ENCODE measurements at regions of chr1 and their contacts with region 1.

Region 1: DNA sequence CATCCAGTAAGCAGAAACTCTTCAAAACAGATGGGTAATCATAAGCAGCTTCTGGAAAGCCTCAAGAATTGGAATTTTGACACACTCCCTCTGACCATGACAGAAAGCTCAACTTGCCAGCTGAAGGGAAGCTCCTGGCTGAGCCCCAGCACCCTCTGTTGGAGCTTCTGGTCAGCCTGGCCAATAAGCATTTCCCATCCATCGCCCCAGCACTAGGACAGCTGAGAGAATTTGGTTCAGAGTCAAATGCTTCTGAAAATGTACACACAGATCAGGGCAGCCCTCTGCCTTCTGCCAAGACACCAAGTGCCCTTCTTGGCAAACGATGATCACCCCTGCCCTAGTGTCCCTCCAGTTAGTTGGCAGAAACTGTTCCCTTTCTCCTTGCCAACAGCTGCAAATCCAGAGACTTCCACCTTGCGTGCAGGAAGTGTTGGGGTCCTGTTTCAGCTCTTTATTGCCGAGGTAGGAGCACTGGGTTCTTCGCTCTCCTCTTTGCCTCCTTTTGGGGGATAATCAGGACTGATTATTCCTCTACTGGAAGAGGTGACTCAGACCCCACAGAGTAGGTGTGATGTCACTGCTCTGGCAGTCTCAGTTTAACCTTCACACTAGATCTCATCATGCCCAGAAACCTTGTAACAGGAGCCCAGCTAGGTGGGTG is 11.9 kb downstream of the PIGV start:
- DNase-seq: peak in 1 of 5 donors; percentile 37
- H3K4me3 ChIP-seq: no peak overlapping the region
- H3K27ac ChIP-seq: peak overlapping the region; percentile 53 to 68
- H3K4me1 ChIP-seq: peaks cover 0 to 8% (median 7%) of the 10 kb centered on the region in 3 donors
- H3K27me3 ChIP-seq: no peaks in the 10 kb centered on the region
- CTCF ChIP-seq: no peak

Region 2: DNA sequence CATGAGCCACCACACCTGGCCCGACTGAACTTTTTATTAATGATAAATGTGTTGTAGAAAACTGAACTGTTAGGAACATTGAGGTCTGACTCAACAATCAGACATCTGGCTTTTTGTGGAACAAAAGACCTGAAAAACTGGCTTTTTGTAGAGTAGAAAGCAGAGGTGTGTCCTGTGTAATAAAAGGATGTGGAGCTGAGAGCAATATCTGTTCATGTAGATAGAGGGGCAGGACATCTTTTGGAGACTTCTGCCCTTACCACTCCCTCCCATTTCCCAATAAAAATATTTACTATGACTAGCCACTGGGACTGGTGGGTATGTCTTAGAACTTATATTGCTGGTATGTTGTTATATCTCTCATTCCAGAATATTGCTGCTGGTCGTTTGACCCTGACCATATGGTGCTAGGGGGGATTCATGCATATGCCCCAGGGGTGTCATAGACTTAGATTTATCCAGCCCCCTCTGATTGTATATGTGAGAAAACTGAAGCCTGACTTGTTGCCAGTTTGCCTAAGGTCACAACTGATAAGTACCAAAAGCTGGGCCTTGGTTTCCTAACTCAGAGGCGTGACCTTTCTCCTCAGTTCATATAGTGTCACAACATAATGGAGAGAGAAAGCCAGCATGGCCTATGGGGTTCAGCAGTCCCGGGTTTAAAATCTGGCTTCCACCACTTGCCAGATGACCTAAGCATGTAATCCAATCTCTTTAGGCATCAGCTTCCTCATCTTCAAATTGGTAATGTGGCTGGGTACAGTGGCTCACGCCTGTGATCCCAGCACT is 45.3 kb before region 1 on chr1:
- intact Hi-C with region 1: no loop called
- DNase-seq: no peak
- H3K4me3 ChIP-seq: no peak overlapping the region
- H3K27ac ChIP-seq: no peak overlapping the region
- H3K4me1 ChIP-seq: peaks cover 0 to 9% (median 0%) of the 10 kb centered on the region in 3 donors
- H3K27me3 ChIP-seq: no peaks in the 10 kb centered on the region
- CTCF ChIP-seq: no peak

Region 3: DNA sequence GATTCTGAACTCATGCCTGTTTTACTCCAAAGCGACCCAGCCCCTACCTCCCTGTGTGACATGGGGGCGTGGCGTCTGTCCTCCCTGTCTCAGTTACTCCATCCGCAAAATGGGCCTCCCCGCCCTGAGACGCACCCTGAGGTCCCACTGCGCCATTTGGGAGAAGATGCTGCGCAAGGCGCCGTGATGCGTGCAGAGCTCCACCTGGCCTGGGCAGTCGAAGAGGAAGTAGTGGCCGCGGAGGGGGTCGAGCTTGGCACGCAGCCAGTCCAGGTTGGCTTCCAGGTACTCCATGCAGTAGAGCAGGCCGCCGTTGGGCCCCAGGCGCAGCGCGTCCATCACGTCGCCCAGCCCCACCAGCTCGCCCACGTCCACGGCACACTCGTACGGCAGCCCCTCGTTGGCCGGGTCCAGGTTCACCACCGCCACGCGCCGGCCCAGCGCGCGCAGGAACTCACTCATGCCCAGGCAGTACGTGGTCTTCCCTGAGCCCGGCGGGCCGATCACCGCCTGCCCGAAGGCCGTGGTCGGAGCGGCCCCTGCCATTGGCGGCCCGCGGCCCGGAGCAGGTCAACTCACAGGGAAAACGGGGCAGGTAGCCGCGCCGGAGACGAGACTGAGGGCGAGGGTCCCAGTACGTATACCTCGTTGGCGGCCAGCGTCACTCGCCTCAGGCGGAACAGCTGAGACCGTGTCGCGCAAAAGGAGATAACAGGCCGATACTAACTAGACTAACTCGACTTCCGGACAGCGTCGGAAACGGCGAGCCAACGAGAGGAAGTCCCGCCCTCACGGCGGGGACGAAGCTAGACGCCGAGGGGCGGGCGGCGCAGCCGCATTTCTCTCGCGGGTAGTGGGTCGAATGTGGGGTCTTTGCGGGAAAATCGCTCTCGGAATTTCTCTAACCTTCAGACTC is 90.2 kb after region 1 on chr1 and contains the start of gene GPN2:
- intact Hi-C with region 1: loop called (anchors 10 kb)
- DNase-seq: peak; percentile 80 to 95 (median 87)
- H3K4me3 ChIP-seq: peak within 1 kb of the TSS; percentile 68 to 92 (median 74)
- H3K27ac ChIP-seq: peak within 1 kb of the TSS; percentile 83 to 94
- H3K4me1 ChIP-seq: peaks cover 3 to 14% (median 8%) of the 10 kb centered on the region in 3 donors
- H3K27me3 ChIP-seq: no peaks in the 10 kb centered on the region
- CTCF ChIP-seq: no peak
- total RNA-seq, gene GPN2: 28.8 TPM

Region 4: DNA sequence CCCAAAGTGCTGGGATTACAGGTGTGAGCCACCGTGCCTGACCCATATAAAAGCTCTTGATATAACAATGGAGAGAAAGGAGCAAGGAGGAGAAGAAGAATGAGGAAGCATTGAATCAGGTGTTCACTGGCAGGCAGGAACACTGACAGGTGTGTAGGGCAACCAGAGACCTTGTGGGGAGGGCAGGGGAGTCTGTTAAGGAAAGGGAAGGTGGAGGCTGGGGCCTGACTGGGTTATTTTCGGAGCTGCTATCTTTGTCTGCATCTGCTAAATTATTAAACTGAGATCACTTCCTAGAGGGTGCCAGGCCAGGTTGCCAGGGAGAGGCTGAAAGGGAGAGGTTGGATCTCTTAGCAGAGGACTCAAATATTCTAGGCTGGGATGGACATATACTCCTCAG is 187.0 kb after region 1 on chr1:
- intact Hi-C with region 1: no loop called
- DNase-seq: peak in 1 of 5 donors; percentile 48
- H3K4me3 ChIP-seq: no peak overlapping the region
- H3K27ac ChIP-seq: no peak overlapping the region
- H3K4me1 ChIP-seq: peaks cover 0 to 2% (median 0%) of the 10 kb centered on the region in 3 donors
- H3K27me3 ChIP-seq: no peaks in the 10 kb centered on the region
- CTCF ChIP-seq: no peak

Region 5: GRCh38 chr1:26999440-26999987 is 199.9 kb after region 1 on chr1:
- intact Hi-C with region 1: no loop called
- DNase-seq: peak; percentile 69 to 91 (median 76)
- H3K4me3 ChIP-seq: no peak overlapping the region
- H3K27ac ChIP-seq: peak overlapping the region; percentile 33 to 71
- H3K4me1 ChIP-seq: peaks cover 3 to 23% (median 12%) of the 10 kb centered on the region in 3 donors
- H3K27me3 ChIP-seq: peaks cover 9% of the 10 kb centered on the region
- CTCF ChIP-seq: no peak